ENCODE measurements at regions of chr17 and their contacts with region 1.

Region 1: DNA sequence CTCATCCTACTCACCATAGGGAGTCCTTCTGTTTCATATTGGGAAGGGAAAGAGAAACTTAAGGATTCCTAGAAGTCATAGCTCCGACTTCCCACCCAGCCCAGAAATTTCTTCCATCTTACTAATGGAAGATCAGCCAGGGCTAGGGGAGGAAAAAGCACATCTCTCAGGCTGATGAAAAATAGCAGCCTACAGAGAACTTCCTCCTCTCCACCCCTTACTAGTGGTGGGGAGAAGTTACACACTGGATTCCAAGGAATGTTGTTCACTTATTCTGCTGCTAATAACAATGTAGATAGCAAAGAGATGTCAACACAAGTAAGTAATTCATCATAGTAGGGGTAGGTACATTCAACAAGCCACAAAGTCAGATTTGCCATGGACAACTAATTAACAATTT is 94.4 kb downstream of the SPACA3 start:
- DNase-seq: no peak
- ATAC-seq: no peak
- H3K4me3 ChIP-seq: no peak overlapping the region
- H3K27ac ChIP-seq: no peak overlapping the region
- H3K4me1 ChIP-seq: no peaks in the 10 kb centered on the region
- H3K27me3 ChIP-seq: peaks cover 0 to 60% (median 23%) of the 10 kb centered on the region in 7 donors
- CTCF ChIP-seq: no peak

Region 2: DNA sequence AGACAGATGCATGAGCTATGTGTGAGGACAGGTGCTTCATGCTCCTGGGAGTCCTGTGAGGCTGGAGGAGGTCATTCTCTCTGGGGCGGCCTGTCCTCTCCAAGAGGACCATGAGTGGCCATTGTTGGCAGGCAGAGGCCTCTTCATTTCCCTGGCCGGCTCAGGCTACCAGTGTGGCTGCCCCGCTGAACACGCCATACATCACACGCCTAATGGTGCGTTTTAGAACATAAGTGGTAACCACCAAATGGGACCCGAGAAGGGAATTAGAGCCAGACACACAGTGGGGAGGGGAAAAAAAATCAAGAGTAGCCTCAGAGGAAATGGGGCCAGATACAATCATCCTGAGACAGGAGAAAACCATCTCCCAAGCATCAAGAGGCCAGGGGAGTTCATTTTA is 45.6 kb after region 1 on chr17:
- intact Hi-C with region 1: loop called in 1 of 10 experiments (anchors 10 kb)
- DNase-seq: no peak
- ATAC-seq: no peak
- H3K4me3 ChIP-seq: no peak overlapping the region
- H3K27ac ChIP-seq: no peak overlapping the region
- H3K4me1 ChIP-seq: no peaks in the 10 kb centered on the region
- H3K27me3 ChIP-seq: peaks cover 0 to 46% (median 10%) of the 10 kb centered on the region in 7 donors
- CTCF ChIP-seq: no peak

Region 3: DNA sequence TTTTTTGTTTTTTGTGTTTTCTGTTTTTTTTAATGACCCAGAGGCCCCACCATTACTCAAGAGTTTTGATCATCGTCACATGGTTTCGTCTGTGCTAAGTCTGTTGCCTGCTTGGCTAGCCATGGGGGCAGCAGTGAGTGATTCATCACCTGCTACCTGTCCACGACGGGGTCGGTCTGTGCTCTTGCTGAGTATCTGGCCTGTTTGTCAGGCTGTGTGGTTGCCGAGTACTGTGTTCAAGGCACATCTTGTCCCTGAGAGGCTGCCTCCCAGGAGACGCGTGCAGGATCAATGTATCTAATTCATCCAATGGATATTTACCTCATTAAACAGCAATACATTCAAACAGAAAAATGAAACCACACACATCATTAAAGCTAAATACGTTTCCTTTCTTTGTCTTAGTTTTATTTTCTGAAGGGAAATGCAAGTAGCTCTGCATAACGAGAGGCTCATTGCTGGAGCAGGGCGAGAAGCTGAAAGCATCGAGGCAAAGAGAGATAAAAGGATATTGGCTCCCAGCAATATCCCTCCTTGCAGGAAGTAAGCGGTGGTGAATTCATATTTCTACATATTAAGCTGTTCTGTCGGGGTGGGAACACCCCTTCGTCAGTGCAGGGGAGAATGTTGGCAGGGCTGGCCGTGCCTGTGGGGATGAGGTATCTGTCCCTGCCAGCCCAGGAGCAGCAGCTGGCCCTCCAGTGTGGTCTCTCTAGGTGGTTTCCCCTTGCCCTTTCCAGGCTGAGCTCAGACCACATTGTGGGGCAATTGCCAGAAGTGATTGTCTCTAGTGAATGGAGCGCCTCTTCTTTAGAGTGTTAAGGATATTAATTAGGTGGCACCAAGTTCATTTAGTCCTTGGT is 373.3 kb after region 1 on chr17:
- intact Hi-C with region 1: no loop called
- DNase-seq: no peak
- ATAC-seq: no peak
- H3K4me3 ChIP-seq: no peak overlapping the region
- H3K27ac ChIP-seq: no peak overlapping the region
- H3K4me1 ChIP-seq: no peaks in the 10 kb centered on the region
- H3K27me3 ChIP-seq: peaks cover 0 to 63% (median 26%) of the 10 kb centered on the region in 7 donors
- CTCF ChIP-seq: no peak